Calu3 (cell line): ENCODE measurements at regions of chr6 and their contacts with region 1.

Region 1: GRCh38 chr6:158910484-158911348 is 89.3 kb downstream of the RSPH3 start:
- DNase-seq: peak; percentile 76
- H3K4me3 Mint-ChIP-seq: peak overlapping the region; percentile 49
- H3K27ac Mint-ChIP-seq: peak overlapping the region; percentile 95
- H3K4me1 Mint-ChIP-seq: peaks cover 63% of the 10 kb centered on the region
- H3K27me3 Mint-ChIP-seq: no peaks in the 10 kb centered on the region
- CTCF ChIP-seq: no peak

Region 2: DNA sequence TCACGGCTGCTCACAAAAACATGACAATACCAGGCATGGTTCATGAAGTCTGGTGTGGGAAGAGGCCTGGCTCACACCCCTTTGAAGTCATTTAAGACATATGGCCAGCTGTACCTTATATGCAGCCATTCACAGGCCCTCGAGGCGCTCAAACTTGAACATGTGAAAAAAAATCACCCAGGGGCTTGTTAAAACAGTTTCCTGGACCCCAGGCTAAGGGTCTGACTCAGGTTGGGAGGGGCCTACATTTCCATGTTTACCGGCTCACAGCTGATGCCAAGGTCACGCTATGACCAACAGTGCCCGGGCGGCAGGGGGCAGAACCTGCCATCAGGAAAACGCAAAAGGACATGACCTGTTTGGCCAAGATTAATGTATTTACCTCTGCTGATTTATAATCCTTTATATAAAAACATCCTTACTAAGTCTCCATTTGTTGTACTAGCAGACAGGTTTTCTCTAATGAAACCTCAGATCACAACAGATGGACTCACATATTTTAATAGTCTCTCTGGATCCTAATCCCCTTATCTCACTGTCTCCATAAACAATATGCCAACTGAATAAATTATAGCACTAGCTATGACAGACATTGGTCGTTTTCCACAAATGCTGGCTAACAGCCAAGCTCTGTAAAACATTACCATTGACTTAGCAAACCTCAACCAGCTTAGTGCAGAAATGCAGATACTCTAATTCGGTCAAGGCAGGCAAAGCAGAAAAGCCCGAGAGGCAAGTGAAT is 111.5 kb before region 1 on chr6:
- CTCF ChIA-PET with region 1: interaction called, 3 read pairs
- intact Hi-C with region 1: loop called (anchors 1 kb)
- DNase-seq: peak; percentile 72
- H3K4me3 Mint-ChIP-seq: peak overlapping the region; percentile 85
- H3K27ac Mint-ChIP-seq: peak overlapping the region; percentile 94
- H3K4me1 Mint-ChIP-seq: peaks cover 64% of the 10 kb centered on the region
- H3K27me3 Mint-ChIP-seq: no peaks in the 10 kb centered on the region
- CTCF ChIP-seq: no peak

Region 3: DNA sequence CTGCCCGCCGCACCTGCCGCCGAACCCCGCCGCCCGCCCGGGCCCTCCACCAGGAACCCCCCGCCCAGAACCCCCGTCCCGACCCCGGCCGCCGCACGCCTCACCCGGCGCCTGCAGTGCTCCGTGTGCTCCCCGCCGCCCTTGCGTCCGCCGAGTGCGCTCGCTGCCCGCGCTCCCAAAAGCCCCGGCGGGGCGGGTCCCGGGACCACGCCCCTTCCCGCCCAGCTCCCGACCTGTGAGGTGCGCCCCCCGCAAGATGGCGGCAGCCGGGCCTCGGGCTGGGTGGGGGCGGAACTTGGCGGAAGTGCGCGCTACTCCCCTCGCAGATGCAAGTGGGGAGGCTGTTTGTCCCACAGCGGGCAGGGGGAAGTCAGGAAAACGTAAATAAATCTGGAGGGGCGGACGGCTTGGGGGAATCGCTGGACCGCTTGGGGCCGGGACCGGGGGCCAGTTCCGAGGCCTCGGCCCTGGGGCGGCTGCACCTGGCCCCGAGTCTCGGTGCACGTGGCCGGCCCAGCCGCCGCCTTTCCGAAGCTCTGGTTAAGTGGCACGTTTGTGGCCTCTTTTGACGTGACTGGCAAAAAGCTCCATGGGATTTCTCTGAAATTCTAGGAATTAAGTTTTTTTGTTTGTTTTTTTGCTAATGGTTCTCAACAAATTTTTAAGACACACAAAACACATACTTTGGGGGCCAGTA is 91.4 kb before region 1 on chr6 and contains the start of gene EZR:
- CTCF ChIA-PET with region 1: no interaction called
- intact Hi-C with region 1: loop called (anchors 2 kb)
- DNase-seq: peak; percentile 87
- H3K4me3 Mint-ChIP-seq: peak within 1 kb of the TSS; percentile 85
- H3K27ac Mint-ChIP-seq: peak within 1 kb of the TSS; percentile 97
- H3K4me1 Mint-ChIP-seq: peaks cover 3% of the 10 kb centered on the region
- H3K27me3 Mint-ChIP-seq: no peaks in the 10 kb centered on the region
- CTCF ChIP-seq: no peak
- total RNA-seq, gene EZR: 935 and 954 TPM in 2 replicates

Region 4: GRCh38 chr6:158991017-158991723 is 80.5 kb after region 1 on chr6:
- CTCF ChIA-PET with region 1: no interaction called
- intact Hi-C with region 1: no loop called
- DNase-seq: no peak
- H3K4me3 Mint-ChIP-seq: no peak overlapping the region
- H3K27ac Mint-ChIP-seq: no peak overlapping the region
- H3K4me1 Mint-ChIP-seq: peaks cover 15% of the 10 kb centered on the region
- H3K27me3 Mint-ChIP-seq: no peaks in the 10 kb centered on the region
- CTCF ChIP-seq: no peak

Region 5: DNA sequence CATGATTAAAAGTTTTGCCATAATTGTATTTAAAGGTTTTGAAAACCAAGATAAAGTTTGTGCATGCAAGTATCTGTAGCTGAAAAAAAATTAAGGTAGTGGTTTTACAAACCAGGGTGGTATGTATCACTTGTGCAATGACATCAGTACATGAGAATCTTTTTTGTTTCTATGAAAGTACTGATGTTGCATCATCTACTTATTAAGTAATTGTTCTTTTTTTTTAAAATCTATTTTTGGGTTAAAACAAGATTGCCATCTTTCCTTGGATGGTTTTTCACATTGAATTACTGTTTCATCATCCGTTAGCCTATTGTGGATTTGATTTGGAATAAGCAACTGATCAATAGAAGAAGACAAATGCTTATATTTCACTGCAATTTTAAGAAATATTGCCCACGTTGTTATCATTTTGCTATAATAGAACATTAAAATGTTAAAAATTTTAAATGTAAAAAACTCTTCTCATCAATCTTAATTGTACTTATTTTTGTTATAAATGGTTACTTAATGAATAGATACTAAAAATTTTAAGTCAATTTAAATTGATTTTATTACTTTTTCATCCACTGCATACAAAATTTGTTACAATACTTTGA is 173.9 kb after region 1 on chr6:
- CTCF ChIA-PET with region 1: no interaction called
- intact Hi-C with region 1: no loop called
- DNase-seq: no peak
- H3K4me3 Mint-ChIP-seq: no peak overlapping the region
- H3K27ac Mint-ChIP-seq: no peak overlapping the region
- H3K4me1 Mint-ChIP-seq: no peaks in the 10 kb centered on the region
- H3K27me3 Mint-ChIP-seq: peaks cover 29% of the 10 kb centered on the region
- CTCF ChIP-seq: no peak

Region 6: GRCh38 chr6:159094444-159095252 is 183.9 kb after region 1 on chr6:
- CTCF ChIA-PET with region 1: no interaction called
- intact Hi-C with region 1: no loop called
- DNase-seq: no peak
- H3K4me3 Mint-ChIP-seq: no peak overlapping the region
- H3K27ac Mint-ChIP-seq: no peak overlapping the region
- H3K4me1 Mint-ChIP-seq: no peaks in the 10 kb centered on the region
- H3K27me3 Mint-ChIP-seq: peaks cover 24% of the 10 kb centered on the region
- CTCF ChIP-seq: no peak